ENCODE measurements at regions of chr1 and their contacts with region 1.

Region 1: GRCh38 chr1:67853704-67854103 is 20.4 kb upstream of the GNG12 start:
- DNase-seq: peak; percentile 27 to 50
- ATAC-seq: peak in 2 of 4 donors; percentile 31 to 48
- H3K4me3 ChIP-seq: no peak overlapping the region
- H3K27ac ChIP-seq: no peak overlapping the region
- H3K4me1 ChIP-seq: peaks cover 7% of the 10 kb centered on the region
- H3K27me3 ChIP-seq: peaks cover 0 to 1% (median 0%) of the 10 kb centered on the region in 3 donors
- CTCF ChIP-seq: peak; percentile 56

Region 2: DNA sequence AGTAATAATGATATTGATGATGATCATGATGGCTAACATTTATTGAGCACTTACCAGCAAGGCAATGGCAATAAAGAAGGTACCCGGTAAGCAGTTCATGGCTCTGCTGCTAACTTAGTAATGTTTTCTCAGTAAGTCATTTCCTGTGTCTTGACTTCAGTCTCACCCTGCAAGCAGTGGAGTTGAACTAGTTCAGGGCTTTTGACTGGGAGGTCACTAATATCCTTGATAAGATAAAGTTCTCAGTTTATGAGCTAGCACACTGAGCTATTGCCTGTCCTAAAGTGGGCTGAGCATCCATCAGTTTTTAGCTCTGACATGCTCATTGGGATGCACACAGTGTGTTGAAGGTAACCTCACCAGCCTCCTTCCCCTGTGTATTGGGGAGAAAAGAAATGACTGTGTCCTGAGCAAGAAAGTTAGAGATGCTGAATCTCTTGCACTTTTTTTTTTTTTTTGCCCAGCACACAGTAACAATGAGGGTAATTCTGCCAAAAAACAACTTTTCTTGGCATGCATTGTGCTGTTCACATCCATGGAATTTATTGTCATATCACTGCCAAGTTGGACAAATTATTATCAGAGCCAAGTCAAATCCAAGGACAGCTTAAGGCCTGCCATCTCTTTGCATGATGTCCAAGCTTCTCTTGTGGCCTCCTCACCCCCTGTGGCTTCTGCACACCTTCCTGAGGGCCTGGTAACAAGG is 224.2 kb before region 1 on chr1:
- intact Hi-C with region 1: no loop called
- DNase-seq: no peak
- ATAC-seq: no peak
- H3K4me3 ChIP-seq: no peak overlapping the region
- H3K27ac ChIP-seq: no peak overlapping the region
- H3K4me1 ChIP-seq: no peaks in the 10 kb centered on the region
- H3K27me3 ChIP-seq: no peaks in the 10 kb centered on the region
- CTCF ChIP-seq: no peak

Region 3: GRCh38 chr1:67889953-67890567 is 36.4 kb after region 1 on chr1:
- intact Hi-C with region 1: no loop called
- DNase-seq: no peak
- ATAC-seq: peak in 1 of 4 donors; percentile 32
- H3K4me3 ChIP-seq: no peak overlapping the region
- H3K27ac ChIP-seq: no peak overlapping the region
- H3K4me1 ChIP-seq: no peaks in the 10 kb centered on the region
- H3K27me3 ChIP-seq: no peaks in the 10 kb centered on the region
- CTCF ChIP-seq: no peak

Region 4: GRCh38 chr1:67921725-67922489 is 68.2 kb after region 1 on chr1:
- intact Hi-C with region 1: no loop called
- DNase-seq: no peak
- ATAC-seq: no peak
- H3K4me3 ChIP-seq: no peak overlapping the region
- H3K27ac ChIP-seq: no peak overlapping the region
- H3K4me1 ChIP-seq: no peaks in the 10 kb centered on the region
- H3K27me3 ChIP-seq: no peaks in the 10 kb centered on the region
- CTCF ChIP-seq: no peak

Region 5: DNA sequence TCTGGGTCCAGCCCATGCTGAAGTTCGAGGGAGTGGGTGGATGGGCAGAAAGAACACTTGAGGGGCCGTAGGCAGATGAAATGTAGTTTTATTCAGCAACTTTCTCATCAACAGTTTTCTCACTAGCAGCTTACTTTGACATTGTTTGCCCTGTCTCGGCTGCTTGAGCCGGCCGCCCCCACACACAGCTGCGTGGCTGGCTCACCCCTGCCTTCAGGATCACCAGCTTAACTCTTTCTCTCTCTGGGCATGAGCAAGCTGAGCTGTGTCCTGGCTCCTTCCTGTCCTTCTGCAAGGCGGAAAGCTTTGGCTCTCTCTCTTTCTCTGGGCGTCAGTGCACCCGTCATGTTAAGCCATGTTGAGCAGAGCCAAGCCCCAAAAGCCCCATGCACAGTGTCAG is 83.9 kb after region 1 on chr1:
- intact Hi-C with region 1: no loop called
- DNase-seq: no peak
- ATAC-seq: no peak
- H3K4me3 ChIP-seq: no peak overlapping the region
- H3K27ac ChIP-seq: no peak overlapping the region
- H3K4me1 ChIP-seq: no peaks in the 10 kb centered on the region
- H3K27me3 ChIP-seq: no peaks in the 10 kb centered on the region
- CTCF ChIP-seq: no peak

Region 6: DNA sequence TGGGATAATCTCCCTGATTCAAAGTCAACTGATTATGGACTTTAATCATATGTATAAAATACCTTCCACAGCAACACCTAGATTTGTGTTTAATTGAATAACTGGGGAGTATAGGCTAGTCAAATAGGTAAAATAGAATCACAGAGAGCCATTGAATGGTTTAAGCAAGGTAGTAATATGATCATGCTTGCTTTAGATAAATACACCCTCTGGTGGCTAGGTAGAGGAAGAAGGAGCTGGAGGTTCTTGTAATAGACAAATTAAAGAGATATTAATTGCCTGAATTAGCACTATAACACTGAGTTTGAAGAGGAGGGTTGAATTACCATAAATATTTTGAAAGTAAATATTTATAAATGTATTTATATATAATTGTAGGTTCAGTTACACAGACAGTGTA is 156.4 kb after region 1 on chr1:
- intact Hi-C with region 1: loop called in 1 of 2 experiments (anchors 2 kb)
- DNase-seq: no peak
- ATAC-seq: no peak
- H3K4me3 ChIP-seq: no peak overlapping the region
- H3K27ac ChIP-seq: no peak overlapping the region
- H3K4me1 ChIP-seq: no peaks in the 10 kb centered on the region
- H3K27me3 ChIP-seq: no peaks in the 10 kb centered on the region
- CTCF ChIP-seq: peak; percentile 33

Region 7: GRCh38 chr1:68111519-68112436 is 258.1 kb after region 1 on chr1:
- intact Hi-C with region 1: loop called (anchors 2 to 10 kb)
- DNase-seq: peak; percentile 59 to 85
- ATAC-seq: peak; percentile 75 to 90 (median 87)
- H3K4me3 ChIP-seq: no peak overlapping the region
- H3K27ac ChIP-seq: no peak overlapping the region
- H3K4me1 ChIP-seq: peaks cover 11% of the 10 kb centered on the region
- H3K27me3 ChIP-seq: no peaks in the 10 kb centered on the region
- CTCF ChIP-seq: peak; percentile 60

Region 8: DNA sequence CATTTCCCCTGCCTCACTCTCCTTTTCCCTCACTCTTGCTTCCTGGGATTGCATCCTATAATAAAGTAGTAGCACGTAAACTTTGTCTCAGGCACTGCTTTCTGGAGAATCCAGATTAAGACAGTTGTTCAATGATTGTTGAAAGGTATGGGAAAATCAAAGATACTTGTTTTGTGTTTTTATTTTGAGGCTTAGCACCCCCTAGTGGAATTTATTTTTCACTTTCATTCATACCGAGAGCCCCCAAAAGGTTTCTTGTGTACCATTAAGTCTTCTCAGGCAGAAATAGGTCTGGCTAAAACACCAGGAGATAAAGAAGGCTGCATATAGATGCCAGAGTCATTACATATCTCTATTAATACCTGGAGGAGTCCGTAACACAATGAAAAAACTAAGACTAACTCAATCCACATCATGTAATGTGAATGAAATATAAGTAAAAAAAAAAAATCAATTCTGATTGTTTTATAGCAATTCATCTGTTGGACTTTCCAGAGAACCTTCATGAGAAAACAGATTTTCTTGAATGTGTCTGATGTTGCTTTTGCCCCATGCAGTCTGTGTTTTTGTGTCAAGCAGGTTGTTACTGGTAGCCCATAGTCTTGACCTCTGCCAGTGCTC is 492.6 kb after region 1 on chr1:
- intact Hi-C with region 1: loop called (anchors 5 to 10 kb)
- DNase-seq: no peak
- ATAC-seq: peak in 1 of 4 donors; percentile 51
- H3K4me3 ChIP-seq: no peak overlapping the region
- H3K27ac ChIP-seq: no peak overlapping the region
- H3K4me1 ChIP-seq: no peaks in the 10 kb centered on the region
- H3K27me3 ChIP-seq: no peaks in the 10 kb centered on the region
- CTCF ChIP-seq: peak; percentile 54

Measured in psoas muscle (tissue), 8 donors.